IMR-90 (cell line): ENCODE measurements at regions of chr1 and their contacts with region 1.

Region 1: DNA sequence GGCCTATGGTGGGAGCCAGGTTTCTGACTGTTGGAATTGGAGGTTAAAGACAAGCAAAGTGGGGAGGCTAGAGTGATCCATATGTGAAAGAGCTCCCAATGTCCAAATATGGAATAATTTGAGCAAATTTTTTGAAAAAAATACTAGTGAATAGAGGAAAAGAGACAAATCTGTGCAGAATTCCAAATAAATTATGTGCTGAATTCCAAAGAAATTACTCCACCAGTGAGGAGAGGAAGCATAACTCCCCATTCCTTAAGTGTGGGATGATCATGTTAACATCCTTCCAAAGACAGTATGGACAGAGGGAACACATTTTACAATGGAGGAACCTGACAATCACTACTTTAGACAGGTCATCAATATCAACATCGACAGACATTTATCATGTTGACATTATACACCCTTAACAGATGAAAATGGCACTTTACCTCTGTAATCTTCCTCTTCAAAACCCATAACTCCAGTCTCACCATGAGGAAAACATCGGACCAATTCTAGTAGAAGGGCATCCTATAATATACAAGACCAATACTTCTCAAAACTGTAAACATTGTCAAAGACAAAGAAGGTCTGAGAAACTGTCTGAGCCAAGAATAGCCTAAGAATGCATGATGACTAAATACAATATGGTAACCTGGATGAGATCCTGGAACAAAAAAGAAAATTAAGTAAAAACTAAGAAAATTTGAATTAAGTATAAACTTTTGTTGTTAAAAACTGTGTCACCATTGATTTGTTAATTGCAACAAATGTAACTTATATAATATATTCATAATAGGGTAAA is 71.5 kb upstream of the RGS4 start:
- DNase-seq: peak; percentile 77
- ATAC-seq: peak; percentile 80
- H3K4me3 ChIP-seq: no peak overlapping the region
- H3K27ac ChIP-seq: peak overlapping the region; percentile 13; the same call in 1 of the 2 replicates
- H3K4me1 ChIP-seq: peaks cover 4% of the 10 kb centered on the region; the same call in 1 of the 2 replicates
- H3K27me3 ChIP-seq: no peaks in the 10 kb centered on the region
- CTCF ChIP-seq: no peak
- POLR2A ChIP-seq: no peak
- RAD21 ChIP-seq: no peak

Region 2: GRCh38 chr1:163029901-163030300 is 32.2 kb after region 1 on chr1:
- CTCF ChIA-PET with region 1: no interaction called
- POLR2A ChIA-PET with region 1: no interaction called
- dilution Hi-C with region 1: no loop called
- in situ Hi-C with region 1: no loop called
- intact Hi-C with region 1: loop called (anchors 5 kb)
- DNase-seq: peak; percentile 15
- ATAC-seq: no peak
- H3K4me3 ChIP-seq: no peak overlapping the region
- H3K27ac ChIP-seq: no peak overlapping the region
- H3K4me1 ChIP-seq: no peaks in the 10 kb centered on the region; the same call in 1 of the 2 replicates
- H3K27me3 ChIP-seq: no peaks in the 10 kb centered on the region
- CTCF ChIP-seq: no peak
- POLR2A ChIP-seq: no peak
- RAD21 ChIP-seq: no peak